ENCODE measurements at regions of chr1 and their contacts with region 1.

Region 1: DNA sequence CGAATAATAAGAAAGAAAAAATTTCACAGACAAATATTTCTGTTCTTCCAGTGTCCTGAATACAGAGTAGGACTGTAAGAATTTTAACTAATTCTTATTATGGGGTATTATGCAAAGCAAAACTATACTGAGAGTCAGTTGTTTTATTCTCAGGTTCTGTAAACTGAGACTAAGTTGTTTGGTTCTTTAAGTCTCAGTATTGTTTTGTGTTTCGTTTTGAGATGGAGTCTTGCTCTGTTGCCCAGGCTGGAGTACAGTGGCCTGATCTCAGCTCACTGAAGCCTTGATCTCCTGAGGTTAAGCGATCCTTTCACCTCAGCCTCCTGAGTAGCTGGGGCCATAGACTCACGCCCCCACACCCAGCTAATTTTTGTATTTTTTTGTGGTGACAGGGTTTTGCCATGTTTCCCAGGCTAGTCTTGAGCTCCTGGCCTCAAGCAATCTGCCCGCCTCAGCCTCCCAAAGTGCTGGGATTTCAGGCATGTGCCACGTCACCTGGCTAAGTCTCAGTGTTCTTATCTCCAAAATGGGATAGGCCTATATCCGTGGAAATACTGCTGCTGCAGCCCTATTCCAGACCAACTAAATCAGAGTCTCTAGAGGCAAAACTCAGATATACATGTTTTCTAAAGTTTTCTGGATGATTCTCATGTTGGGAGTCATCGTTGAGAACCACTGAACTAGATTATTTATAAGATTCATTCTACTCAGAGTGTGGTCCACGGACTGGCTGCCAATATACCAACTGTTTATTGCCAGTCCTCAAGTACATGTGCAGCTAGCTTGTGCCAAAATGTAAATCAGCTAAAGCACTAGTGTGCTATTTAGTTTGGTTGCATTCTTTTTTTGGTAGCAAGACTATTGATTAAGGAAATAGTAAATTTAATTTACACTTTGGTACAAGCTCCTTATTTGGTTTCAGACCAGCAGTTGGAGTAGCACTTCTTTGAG is 116.6 kb downstream of the HS2ST1 start:
- DNase-seq: no peak
- H3K4me3 ChIP-seq: no peak overlapping the region
- H3K27ac ChIP-seq: no peak overlapping the region
- H3K4me1 ChIP-seq: no peaks in the 10 kb centered on the region
- H3K27me3 ChIP-seq: no peaks in the 10 kb centered on the region
- CTCF ChIP-seq: no peak
- POLR2A ChIP-seq: no peak

Region 2: DNA sequence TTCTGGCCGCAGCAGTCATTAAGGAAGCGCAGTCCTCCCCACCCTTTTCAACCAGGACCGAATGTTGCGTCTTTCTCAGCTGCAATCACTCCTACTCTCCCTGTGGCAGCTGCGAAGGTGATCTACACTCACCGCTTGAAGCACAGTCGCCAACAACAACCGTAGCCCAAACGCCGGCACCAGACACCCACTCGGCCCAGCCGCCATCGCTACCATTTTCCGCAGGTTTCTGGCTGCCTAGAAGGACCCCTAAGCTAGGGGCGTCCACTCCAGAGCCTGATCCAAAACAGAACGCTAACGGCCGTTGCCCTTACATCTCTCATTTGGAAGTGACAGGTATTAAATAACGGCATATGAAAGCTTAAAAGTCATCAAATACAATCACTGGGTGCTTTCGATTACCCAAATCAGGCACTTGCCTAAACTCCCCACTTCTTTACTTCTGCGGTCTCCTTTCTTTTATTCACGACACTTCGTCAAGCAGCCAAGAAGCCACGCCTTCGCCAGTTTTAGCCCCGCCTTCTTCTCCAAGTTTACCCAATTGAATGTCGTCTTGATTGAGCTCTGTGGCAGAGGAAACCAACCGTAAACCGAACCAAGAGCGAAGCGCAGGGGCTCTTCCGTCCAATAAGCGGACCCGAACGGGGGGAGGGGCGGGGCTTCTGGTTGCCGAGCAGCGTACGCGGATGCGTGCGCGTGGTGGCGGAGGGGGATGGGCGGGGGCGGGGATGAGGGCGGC is 117.0 kb before region 1 on chr1 and contains the start of gene SELENOF:
- intact Hi-C with region 1: no loop called
- DNase-seq: peak; percentile 99
- H3K4me3 ChIP-seq: peak within 1 kb of the TSS; percentile 83
- H3K27ac ChIP-seq: peak within 1 kb of the TSS; percentile 89
- H3K4me1 ChIP-seq: no peaks in the 10 kb centered on the region
- H3K27me3 ChIP-seq: no peaks in the 10 kb centered on the region
- CTCF ChIP-seq: peak in 2 of 4 experiments; percentile 16 to 21
- POLR2A ChIP-seq: peak; percentile 78
- total RNA-seq, gene SELENOF: 137 to 175 TPM

Region 3: DNA sequence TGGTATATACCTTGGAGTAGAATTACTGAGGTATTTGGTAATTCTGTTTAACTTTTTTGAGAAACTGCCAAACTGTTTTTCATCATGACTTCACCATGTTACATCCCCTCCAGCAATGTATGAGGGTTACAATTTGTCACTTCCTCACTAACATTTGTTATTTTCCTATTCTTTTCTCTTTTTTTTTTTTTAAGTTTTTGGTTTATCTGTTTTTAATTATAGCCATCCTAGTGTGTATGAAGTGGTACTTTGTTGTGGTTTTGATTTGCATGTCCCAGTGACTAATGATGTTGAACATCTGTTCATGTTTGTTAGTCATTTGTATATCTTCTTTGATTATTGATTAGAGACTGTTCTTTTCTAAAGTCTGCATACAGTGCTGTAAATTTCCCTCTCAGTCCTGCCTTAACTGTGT is 30.7 kb after region 1 on chr1:
- intact Hi-C with region 1: loop called (anchors 2 kb)
- DNase-seq: no peak
- H3K4me3 ChIP-seq: no peak overlapping the region
- H3K27ac ChIP-seq: no peak overlapping the region
- H3K4me1 ChIP-seq: no peaks in the 10 kb centered on the region
- H3K27me3 ChIP-seq: no peaks in the 10 kb centered on the region
- CTCF ChIP-seq: no peak
- POLR2A ChIP-seq: no peak

Region 4: GRCh38 chr1:87093286-87093685 is 62.3 kb after region 1 on chr1:
- intact Hi-C with region 1: no loop called
- DNase-seq: no peak
- H3K4me3 ChIP-seq: no peak overlapping the region
- H3K27ac ChIP-seq: no peak overlapping the region
- H3K4me1 ChIP-seq: no peaks in the 10 kb centered on the region
- H3K27me3 ChIP-seq: no peaks in the 10 kb centered on the region
- CTCF ChIP-seq: no peak
- POLR2A ChIP-seq: no peak

Measured in prostate gland (tissue), 2 donors.